ENCODE measurements at regions of chr5 and their contacts with region 1.

Region 1: DNA sequence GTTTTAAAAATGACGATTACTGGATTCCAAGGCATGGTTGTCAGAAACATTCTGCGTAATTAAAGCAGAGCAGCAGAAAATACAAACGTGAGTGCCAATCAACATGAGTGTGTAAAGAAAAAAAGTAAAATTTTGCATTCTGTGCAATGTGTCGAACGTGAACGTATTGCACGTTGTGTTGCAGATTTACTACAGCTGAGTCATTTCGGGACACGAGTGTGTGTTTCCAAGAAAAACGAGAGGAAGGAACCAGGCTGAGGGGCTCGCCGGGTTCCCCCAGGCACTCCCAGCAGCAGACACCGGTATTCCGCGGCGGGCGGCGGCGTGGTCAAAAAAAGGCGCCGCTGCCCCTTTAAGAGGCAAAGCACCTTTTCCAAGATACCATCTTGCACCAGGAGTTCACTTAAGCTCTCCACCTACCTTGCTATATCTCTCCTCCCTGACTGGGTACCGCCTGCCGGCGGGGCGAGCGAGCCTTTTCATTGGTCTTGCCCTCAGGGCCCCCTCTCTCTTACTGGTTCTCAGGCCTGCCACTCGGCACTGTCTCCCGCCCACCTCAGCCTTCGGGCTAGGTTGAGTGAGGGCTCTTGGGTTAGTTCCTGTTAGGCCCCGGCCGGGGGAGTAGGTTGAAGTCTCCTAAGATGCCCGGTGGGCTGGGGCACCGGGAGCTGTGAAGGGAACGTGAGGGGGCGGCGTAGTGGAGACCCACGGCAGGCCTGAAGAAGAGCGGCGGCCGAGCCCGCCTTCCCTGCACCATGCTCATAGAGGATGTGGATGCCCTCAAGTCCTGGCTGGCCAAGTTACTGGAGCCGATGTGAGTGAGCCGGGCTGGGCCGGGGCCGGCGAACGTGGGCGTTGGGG is at the start of gene RBM27:
- DNase-seq: peak; percentile 97
- H3K4me3 Mint-ChIP-seq: no peak within 1 kb of the TSS
- H3K27ac Mint-ChIP-seq: no peak within 1 kb of the TSS
- H3K4me1 Mint-ChIP-seq: peaks cover 4% of the 10 kb centered on the region
- H3K27me3 Mint-ChIP-seq: no peaks in the 10 kb centered on the region
- total RNA-seq, gene RBM27: 32.0 and 36.0 TPM in 2 replicates

Region 2: DNA sequence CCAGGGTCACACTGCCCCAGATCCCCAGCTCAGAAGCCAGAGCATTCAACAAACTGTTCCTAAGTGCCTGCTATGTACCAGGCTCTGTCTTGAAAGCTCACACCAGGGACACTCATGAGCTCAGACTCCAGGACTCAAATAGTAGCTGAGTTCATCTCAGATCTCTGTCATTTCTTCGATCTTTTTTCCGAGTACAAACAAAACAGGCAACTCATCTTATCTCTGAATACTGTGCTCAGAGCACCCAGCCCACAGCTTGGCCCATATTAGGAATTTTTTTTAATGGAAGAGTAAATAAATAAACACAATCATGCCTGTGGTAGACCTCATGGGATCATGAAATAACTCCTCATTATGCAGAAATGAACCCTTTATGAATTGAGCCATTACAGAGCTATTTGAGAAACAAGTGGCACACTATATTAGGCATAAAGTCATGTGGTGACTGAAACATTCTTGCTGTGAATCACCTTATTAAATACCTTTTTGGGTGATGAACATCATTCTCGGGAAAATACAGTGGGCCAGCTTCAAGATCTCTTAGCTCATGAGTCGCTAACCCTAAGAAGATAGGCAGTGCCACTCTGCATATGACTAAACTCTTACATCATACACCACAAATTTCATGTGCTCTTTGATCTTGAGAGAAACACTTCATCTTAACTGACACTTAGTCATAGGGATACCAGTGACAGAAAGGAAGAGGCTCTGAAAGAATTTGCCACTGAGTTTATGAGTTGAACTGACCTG is 257.0 kb before region 1 on chr5:
- intact Hi-C with region 1: loop called (anchors 1 kb)
- DNase-seq: no peak
- H3K4me3 Mint-ChIP-seq: peak overlapping the region; percentile 14
- H3K27ac Mint-ChIP-seq: peak overlapping the region; percentile 66
- H3K4me1 Mint-ChIP-seq: peaks cover 48% of the 10 kb centered on the region
- H3K27me3 Mint-ChIP-seq: peaks cover 21% of the 10 kb centered on the region

Region 3: GRCh38 chr5:146173597-146173996 is 29.6 kb before region 1 on chr5:
- intact Hi-C with region 1: no loop called
- DNase-seq: no peak
- H3K4me3 Mint-ChIP-seq: peak overlapping the region; percentile 43
- H3K27ac Mint-ChIP-seq: peak overlapping the region; percentile 62
- H3K4me1 Mint-ChIP-seq: peaks cover 13% of the 10 kb centered on the region
- H3K27me3 Mint-ChIP-seq: no peaks in the 10 kb centered on the region

Region 4: DNA sequence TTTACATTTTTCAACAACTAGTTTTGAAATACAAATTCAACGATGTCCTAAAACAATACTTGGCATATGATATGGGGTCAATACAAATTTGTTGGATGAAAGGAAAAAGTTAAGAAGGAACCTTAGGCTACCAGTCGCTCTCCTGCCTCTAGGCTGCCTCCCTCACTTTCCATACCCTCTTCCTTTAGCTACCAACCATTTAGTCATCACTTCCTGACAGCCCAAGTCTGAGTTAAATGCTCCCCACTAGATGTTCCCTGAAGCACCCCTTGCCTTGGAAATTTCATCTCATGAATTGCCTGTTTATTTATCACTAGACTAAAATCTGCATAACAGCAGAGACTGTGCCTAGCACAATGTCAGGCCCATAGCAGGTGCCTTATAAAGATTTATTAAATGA is 18.1 kb before region 1 on chr5:
- intact Hi-C with region 1: loop called (anchors 1 kb)
- DNase-seq: no peak
- H3K4me3 Mint-ChIP-seq: no peak overlapping the region
- H3K27ac Mint-ChIP-seq: no peak overlapping the region
- H3K4me1 Mint-ChIP-seq: peaks cover 8% of the 10 kb centered on the region
- H3K27me3 Mint-ChIP-seq: peaks cover 4% of the 10 kb centered on the region

Region 5: DNA sequence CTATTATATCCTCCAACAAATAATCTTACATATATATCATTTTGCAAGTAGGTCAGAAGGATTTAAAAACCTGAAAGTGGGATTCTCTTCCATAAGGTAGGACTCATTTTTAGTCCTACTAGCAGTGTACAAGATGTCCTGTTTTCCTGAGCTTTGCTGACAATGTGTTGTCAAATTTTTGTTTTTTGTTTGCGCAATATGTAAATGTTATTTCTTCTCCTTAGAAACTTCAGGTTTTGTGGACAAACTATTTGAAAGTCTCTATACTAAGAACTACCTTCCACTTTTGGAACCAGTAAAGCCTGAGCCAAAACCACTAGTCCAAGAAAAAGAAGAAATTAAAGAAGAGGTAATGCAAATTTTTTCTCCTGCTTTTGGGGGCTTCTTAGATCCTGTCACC is 19.9 kb after region 1 on chr5:
- intact Hi-C with region 1: loop called (anchors 1 kb)
- DNase-seq: no peak
- H3K4me3 Mint-ChIP-seq: no peak overlapping the region
- H3K27ac Mint-ChIP-seq: no peak overlapping the region
- H3K4me1 Mint-ChIP-seq: peaks cover 10% of the 10 kb centered on the region
- H3K27me3 Mint-ChIP-seq: no peaks in the 10 kb centered on the region

Region 6: DNA sequence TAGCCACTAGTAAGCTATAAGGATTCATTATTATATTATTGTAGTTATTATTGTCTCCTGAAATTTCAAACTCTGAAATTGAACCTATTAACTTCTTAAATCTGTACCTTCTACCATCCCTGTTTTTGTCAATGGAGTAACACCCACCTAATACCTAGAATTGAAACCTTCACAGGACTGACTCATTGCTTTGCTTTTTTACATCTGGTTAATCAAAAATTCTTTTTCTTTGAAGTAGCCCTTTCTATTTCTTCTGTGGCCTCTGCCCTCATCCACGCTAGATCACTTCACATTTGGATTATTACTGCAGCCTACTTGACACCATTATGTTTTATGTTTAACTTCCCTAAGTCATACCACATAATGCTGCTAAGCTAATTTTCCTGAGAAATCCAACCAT is 35.7 kb after region 1 on chr5:
- intact Hi-C with region 1: loop called (anchors 2 kb)
- DNase-seq: no peak
- H3K4me3 Mint-ChIP-seq: no peak overlapping the region
- H3K27ac Mint-ChIP-seq: peak overlapping the region; percentile 18
- H3K4me1 Mint-ChIP-seq: peaks cover 8% of the 10 kb centered on the region
- H3K27me3 Mint-ChIP-seq: no peaks in the 10 kb centered on the region

Measured in activated T-helper 2 cell treated with anti-CD3 and anti-CD28 coated beads, Interferon-gamma antibody, Interleukin-2, Interleukin-4, amounts not matched to agents 10 μg/mL and 5 μg/mL and 100 μg/mL, durations not matched to agents 14 hours and 24 hours and 36 hours (primary cell).